Psoas muscle (tissue), 8 donors: ENCODE measurements at regions of chr3 and their contacts with region 1.

Region 1: GRCh38 chr3:182792901-182793662 is at the start of gene ATP11B:
- DNase-seq: peak; percentile 69 to 83
- ATAC-seq: peak; percentile 84 to 89 (median 88)
- H3K4me3 ChIP-seq: peak within 1 kb of the TSS; percentile 84
- H3K27ac ChIP-seq: peak within 1 kb of the TSS; percentile 95
- H3K4me1 ChIP-seq: peaks cover 23% of the 10 kb centered on the region
- H3K27me3 ChIP-seq: peaks cover 0 to 8% (median 0%) of the 10 kb centered on the region in 3 donors
- CTCF ChIP-seq: no peak
- total RNA-seq, gene ATP11B: 18.8 to 23.9 (median 20.8) TPM

Region 2: GRCh38 chr3:182740710-182741109 is 52.4 kb before region 1 on chr3:
- intact Hi-C with region 1: loop called (anchors 5 kb)
- DNase-seq: no peak
- ATAC-seq: peak; percentile 88 to 95 (median 93)
- H3K4me3 ChIP-seq: peak overlapping the region; percentile 48
- H3K27ac ChIP-seq: peak overlapping the region; percentile 66
- H3K4me1 ChIP-seq: peaks cover 12% of the 10 kb centered on the region
- H3K27me3 ChIP-seq: peaks cover 0 to 4% (median 0%) of the 10 kb centered on the region in 3 donors
- CTCF ChIP-seq: no peak

Region 3: GRCh38 chr3:182746959-182747358 is 46.1 kb before region 1 on chr3:
- intact Hi-C with region 1: loop called (anchors 5 kb)
- DNase-seq: no peak
- ATAC-seq: no peak
- H3K4me3 ChIP-seq: no peak overlapping the region
- H3K27ac ChIP-seq: no peak overlapping the region
- H3K4me1 ChIP-seq: no peaks in the 10 kb centered on the region
- H3K27me3 ChIP-seq: no peaks in the 10 kb centered on the region
- CTCF ChIP-seq: no peak

Region 4: DNA sequence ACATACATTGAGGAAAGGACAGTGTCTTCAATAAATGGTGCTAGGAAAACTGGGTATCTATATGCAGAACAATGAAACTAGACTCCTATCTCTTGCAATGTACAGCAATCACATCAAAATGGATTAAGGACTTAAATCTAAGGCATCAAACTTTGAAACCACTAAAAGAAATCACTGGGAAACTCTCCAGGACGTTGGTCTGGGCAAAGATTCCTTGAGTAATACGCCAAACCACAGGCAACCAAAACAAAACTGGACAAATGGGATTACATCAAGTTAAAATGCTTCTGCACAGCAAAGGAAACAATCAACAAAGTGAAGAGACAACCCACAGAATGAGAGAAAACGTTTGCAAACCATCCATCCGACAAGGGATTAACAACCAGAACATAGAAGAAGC is 355.0 kb after region 1 on chr3:
- intact Hi-C with region 1: no loop called
- DNase-seq: no peak
- ATAC-seq: no peak
- H3K4me3 ChIP-seq: no peak overlapping the region
- H3K27ac ChIP-seq: no peak overlapping the region
- H3K4me1 ChIP-seq: no peaks in the 10 kb centered on the region
- H3K27me3 ChIP-seq: peaks cover 0 to 3% (median 0%) of the 10 kb centered on the region in 3 donors
- CTCF ChIP-seq: no peak